HEK293 (cell line): ENCODE measurements at regions of chr15 and their contacts with region 1.

Region 1: DNA sequence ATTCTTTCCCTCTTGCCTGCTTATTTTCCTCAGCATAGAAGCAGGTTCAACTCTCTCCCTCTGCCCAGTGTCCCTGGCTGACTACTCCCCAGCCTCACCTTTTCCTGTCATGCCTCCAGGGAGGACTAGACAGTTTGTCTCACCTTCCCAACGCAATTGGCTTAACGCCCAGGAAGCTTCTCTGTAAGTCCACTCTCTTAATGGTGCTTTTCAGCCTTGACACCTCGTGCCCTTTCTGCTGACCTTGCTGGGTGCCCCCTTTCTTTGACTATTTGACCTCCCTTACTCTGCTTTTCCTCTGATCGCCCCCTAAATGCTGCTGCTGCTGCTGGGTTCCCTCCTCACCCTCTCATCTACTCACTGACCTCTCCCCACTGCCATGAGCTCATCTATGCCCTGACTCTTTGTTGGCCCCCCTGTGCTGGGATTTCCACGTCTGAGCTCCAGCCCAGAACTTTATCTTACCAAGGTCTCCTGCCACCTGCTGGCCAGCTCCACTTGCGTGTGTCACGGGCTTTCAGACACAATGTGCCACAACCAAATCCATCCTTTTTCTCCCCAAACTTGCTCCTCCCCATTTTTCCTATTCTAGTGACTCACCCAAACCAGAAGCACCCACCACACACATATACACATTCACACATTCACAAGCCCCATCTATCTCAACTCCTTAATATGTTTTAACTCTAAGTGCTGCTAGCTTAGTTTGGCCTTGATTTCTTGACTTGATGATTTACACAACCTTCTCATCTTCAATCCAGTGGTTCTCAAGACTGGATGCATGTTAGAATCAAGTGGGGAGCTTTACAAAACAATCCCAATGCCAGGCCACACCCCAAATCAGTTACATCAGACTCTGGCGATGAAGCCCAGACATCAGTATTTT is 16.6 kb downstream of the EPB42 start:
- H3K4me3 ChIP-seq: no peak overlapping the region
- H3K27ac ChIP-seq: no peak overlapping the region
- H3K4me1 ChIP-seq: no peaks in the 10 kb centered on the region
- CTCF ChIP-seq: peak; percentile 78

Region 2: DNA sequence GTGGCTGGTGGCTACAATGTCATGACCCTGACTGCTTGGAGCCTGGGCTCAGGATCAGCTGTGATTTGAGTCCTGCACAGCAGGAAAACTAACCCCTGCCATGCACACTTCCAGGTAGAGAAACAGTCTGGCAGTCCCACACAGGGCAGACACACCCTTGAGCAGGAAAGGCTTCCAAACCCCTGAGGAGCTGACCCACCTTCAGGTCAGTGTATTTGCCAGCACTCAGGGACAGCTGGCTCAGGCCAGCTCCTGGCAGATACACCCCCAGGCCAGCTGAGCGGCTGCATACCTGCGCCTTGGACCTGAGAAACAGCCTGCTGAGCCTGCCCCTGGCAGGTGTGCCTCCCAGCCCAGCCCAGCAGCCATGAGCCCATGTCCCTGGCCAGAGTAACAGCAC is 445.2 kb before region 1 on chr15:
- CTCF ChIA-PET with region 1: no interaction called
- POLR2A ChIA-PET with region 1: no interaction called
- H3K4me3 ChIP-seq: no peak overlapping the region
- H3K27ac ChIP-seq: no peak overlapping the region
- H3K4me1 ChIP-seq: no peaks in the 10 kb centered on the region
- CTCF ChIP-seq: no peak

Region 3: GRCh38 chr15:42863572-42864239 is 340.6 kb before region 1 on chr15:
- CTCF ChIA-PET with region 1: no interaction called
- POLR2A ChIA-PET with region 1: no interaction called
- H3K4me3 ChIP-seq: no peak overlapping the region
- H3K27ac ChIP-seq: no peak overlapping the region
- H3K4me1 ChIP-seq: no peaks in the 10 kb centered on the region
- CTCF ChIP-seq: no peak

Region 4: DNA sequence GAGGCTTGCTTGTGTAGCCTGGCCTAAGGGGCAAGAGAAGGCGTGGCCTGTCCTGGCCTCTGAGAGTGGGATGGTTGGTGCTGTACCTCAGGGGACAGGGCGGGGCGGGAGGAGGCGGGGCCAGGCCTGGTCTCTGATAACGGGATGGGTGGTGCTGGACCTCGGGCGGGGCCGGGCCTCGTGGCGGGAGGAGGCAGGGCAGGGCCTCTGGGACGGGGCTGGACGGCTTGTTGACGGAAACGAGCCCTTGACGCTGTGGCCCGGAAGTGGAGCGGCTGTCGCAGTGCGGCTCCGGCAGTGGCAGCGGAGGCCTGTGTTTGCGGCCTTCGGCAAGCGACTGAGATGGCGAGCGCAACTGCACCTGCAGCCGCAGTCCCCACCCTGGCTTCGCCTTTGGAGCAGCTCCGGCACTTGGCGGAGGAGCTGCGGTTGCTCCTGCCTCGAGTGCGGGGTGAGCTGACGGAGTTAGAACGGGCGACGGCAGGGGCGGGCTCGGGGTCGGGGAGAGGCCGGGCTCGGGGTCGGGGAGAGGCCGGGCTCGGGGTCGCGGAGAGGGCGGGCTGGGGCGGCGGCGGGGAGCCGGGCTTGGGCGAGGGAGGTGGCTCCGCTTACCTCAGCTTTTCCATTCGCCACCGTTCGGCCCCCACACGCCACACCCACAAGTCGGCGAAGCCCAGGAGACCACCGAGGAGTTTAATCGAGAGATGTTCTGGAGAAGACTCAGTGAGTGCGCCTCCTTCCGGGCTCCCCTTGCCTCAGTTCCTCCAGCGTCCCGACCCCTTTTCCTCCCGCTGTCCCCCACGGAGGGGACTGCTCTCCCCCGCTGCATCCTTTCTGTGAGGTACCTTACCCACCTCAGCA is 18.9 kb before region 1 on chr15 and contains the start of gene CCNDBP1:
- CTCF ChIA-PET with region 1: interaction called, 38 read pairs
- POLR2A ChIA-PET with region 1: no interaction called
- H3K4me3 ChIP-seq: peak within 1 kb of the TSS; percentile 91
- H3K27ac ChIP-seq: peak within 1 kb of the TSS; percentile 59; the same call in 1 of the 2 replicates
- H3K4me1 ChIP-seq: peaks cover 3% of the 10 kb centered on the region; the same call in 1 of the 2 replicates
- CTCF ChIP-seq: peak; percentile 41

Region 5: GRCh38 chr15:43293402-43293801 is 89.1 kb after region 1 on chr15:
- CTCF ChIA-PET with region 1: no interaction called
- POLR2A ChIA-PET with region 1: no interaction called
- H3K4me3 ChIP-seq: no peak overlapping the region
- H3K27ac ChIP-seq: no peak overlapping the region
- H3K4me1 ChIP-seq: no peaks in the 10 kb centered on the region
- CTCF ChIP-seq: no peak